ENCODE measurements at regions of chr6 and their contacts with region 1.

Region 1: DNA sequence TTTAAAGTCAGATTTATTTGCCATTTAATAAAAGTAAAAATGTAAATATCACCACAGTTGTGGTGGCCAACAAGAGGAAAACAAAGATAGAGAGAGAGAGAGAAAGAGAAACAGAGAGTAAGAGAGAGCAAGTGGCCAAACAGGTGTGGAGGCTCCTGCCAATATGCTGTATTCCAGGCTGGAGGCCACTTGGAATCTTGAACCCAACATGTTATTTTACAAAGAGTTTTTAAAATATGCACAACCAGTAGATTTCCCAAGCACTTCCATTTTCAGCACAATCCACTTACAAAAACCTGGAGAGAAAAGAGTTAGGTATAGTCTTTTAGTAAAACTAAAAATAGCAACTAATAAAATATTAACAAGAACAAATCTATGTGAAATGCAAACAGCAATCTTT is 1323.1 kb upstream of the CITED2 start:
- DNase-seq: no peak
- ATAC-seq: no peak
- H3K4me3 ChIP-seq: no peak overlapping the region
- H3K27ac ChIP-seq: no peak overlapping the region
- H3K4me1 ChIP-seq: no peaks in the 10 kb centered on the region
- H3K27me3 ChIP-seq: no peaks in the 10 kb centered on the region
- CTCF ChIP-seq: no peak

Region 2: GRCh38 chr6:139392794-139393193 is 1304.8 kb before region 1 on chr6:
- CTCF ChIA-PET with region 1: no interaction called
- POLR2A ChIA-PET with region 1: interaction called, 20 read pairs
- in situ Hi-C with region 1: no loop called
- intact Hi-C with region 1: no loop called
- DNase-seq: no peak
- ATAC-seq: no peak
- H3K4me3 ChIP-seq: no peak overlapping the region
- H3K27ac ChIP-seq: no peak overlapping the region
- H3K4me1 ChIP-seq: no peaks in the 10 kb centered on the region
- H3K27me3 ChIP-seq: no peaks in the 10 kb centered on the region
- CTCF ChIP-seq: no peak

Region 3: DNA sequence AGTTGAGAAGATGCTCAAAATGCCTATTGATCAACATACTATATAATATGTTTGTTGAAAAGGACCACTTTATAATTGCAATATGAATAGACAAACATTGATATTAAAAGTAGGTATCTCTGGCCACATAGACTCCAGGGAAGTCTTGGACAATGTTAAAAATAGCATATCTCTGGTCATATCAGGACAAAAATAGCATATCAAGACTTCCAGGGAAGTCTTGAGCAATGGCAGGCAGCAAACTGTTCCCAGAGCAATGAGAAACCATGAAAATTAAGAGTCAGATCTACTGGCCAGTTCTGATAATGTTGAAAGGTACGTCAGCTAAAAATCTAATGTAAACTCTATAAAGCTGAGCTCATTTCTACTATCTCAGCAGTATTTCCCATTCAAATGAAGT is 192.8 kb before region 1 on chr6:
- CTCF ChIA-PET with region 1: no interaction called
- POLR2A ChIA-PET with region 1: no interaction called
- in situ Hi-C with region 1: no loop called
- intact Hi-C with region 1: no loop called
- DNase-seq: no peak
- ATAC-seq: no peak
- H3K4me3 ChIP-seq: no peak overlapping the region
- H3K27ac ChIP-seq: no peak overlapping the region
- H3K4me1 ChIP-seq: no peaks in the 10 kb centered on the region
- H3K27me3 ChIP-seq: no peaks in the 10 kb centered on the region
- CTCF ChIP-seq: no peak

Region 4: GRCh38 chr6:140879946-140880345 is 182.4 kb after region 1 on chr6:
- CTCF ChIA-PET with region 1: no interaction called
- POLR2A ChIA-PET with region 1: no interaction called
- in situ Hi-C with region 1: no loop called
- intact Hi-C with region 1: no loop called
- DNase-seq: no peak
- ATAC-seq: no peak
- H3K4me3 ChIP-seq: no peak overlapping the region
- H3K27ac ChIP-seq: no peak overlapping the region
- H3K4me1 ChIP-seq: no peaks in the 10 kb centered on the region
- H3K27me3 ChIP-seq: no peaks in the 10 kb centered on the region
- CTCF ChIP-seq: no peak

Measured in Panc1 (cell line).